Caco-2 (cell line): ENCODE measurements at regions of chr11 and their contacts with region 1.

Region 1: DNA sequence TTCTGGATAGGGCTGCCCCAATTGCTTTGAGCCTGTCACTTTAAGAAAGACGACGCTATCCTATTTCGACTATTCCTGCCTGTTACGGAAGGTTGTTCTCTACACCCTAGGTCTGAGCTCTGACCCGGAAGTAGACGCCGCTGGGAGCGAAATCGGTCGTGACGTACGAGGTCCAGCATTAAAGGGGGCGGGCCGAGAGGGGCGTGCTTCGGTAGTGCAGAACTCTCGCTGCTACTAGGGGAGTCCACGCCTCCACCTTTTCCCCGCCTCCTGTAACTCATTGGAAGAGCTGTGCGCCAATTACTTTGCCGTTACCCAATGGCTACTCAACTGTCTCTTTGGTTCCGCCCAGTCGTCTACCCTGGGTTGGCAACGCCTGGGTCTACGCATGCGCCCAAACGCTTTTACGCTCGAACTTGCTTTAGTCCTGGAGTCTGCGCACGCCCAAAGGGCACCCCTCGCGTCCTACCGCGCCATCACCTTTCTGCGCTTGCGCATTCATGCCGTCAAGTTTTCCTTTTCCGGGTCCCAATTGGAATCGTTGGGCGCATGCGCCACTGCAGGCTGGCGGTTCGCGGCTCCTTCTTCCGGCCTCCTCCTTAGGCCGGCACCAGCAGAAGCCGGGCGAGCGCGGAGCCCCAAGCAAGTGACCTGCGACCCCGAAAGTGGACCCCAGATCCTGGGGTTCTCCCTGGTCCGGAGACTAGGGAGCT is at the start of gene PCNX3:
- DNase-seq: peak; percentile 100
- H3K4me3 ChIP-seq: peak within 1 kb of the TSS; percentile 91
- H3K4me3 Mint-ChIP-seq: peak within 1 kb of the TSS; percentile 96
- H3K27ac Mint-ChIP-seq: peak within 1 kb of the TSS; percentile 96
- H3K4me1 ChIP-seq: peaks cover 17% of the 10 kb centered on the region
- H3K4me1 Mint-ChIP-seq: peaks cover 24% of the 10 kb centered on the region
- H3K27me3 ChIP-seq: no peaks in the 10 kb centered on the region
- H3K27me3 Mint-ChIP-seq: no peaks in the 10 kb centered on the region
- CTCF ChIP-seq: no peak
- total RNA-seq, gene PCNX3: 52.7 and 52.8 TPM in 2 replicates

Region 2: GRCh38 chr11:65625628-65626342 is 10.4 kb after region 1 on chr11:
- CTCF ChIA-PET with region 1: no interaction called
- POLR2A ChIA-PET with region 1: no interaction called
- intact Hi-C with region 1: no loop called
- DNase-seq: peak in 1 of 2 experiments; percentile 34
- H3K4me3 ChIP-seq: no peak overlapping the region
- H3K4me3 Mint-ChIP-seq: no peak overlapping the region
- H3K27ac Mint-ChIP-seq: peak overlapping the region; percentile 76
- H3K4me1 ChIP-seq: no peaks in the 10 kb centered on the region
- H3K4me1 Mint-ChIP-seq: no peaks in the 10 kb centered on the region
- H3K27me3 ChIP-seq: no peaks in the 10 kb centered on the region
- H3K27me3 Mint-ChIP-seq: no peaks in the 10 kb centered on the region
- CTCF ChIP-seq: peak in 1 of 2 experiments; percentile 44

Region 3: GRCh38 chr11:65652511-65653231 is 37.3 kb after region 1 on chr11:
- CTCF ChIA-PET with region 1: no interaction called
- POLR2A ChIA-PET with region 1: interaction called, 8 read pairs
- intact Hi-C with region 1: loop called (anchors 2 kb)
- DNase-seq: peak; percentile 93 to 96
- H3K4me3 ChIP-seq: peak overlapping the region; percentile 59
- H3K4me3 Mint-ChIP-seq: peak overlapping the region; percentile 76
- H3K27ac Mint-ChIP-seq: peak overlapping the region; percentile 96
- H3K4me1 ChIP-seq: peaks cover 18% of the 10 kb centered on the region
- H3K4me1 Mint-ChIP-seq: peaks cover 18% of the 10 kb centered on the region
- H3K27me3 ChIP-seq: no peaks in the 10 kb centered on the region
- H3K27me3 Mint-ChIP-seq: no peaks in the 10 kb centered on the region
- CTCF ChIP-seq: no peak

Region 4: DNA sequence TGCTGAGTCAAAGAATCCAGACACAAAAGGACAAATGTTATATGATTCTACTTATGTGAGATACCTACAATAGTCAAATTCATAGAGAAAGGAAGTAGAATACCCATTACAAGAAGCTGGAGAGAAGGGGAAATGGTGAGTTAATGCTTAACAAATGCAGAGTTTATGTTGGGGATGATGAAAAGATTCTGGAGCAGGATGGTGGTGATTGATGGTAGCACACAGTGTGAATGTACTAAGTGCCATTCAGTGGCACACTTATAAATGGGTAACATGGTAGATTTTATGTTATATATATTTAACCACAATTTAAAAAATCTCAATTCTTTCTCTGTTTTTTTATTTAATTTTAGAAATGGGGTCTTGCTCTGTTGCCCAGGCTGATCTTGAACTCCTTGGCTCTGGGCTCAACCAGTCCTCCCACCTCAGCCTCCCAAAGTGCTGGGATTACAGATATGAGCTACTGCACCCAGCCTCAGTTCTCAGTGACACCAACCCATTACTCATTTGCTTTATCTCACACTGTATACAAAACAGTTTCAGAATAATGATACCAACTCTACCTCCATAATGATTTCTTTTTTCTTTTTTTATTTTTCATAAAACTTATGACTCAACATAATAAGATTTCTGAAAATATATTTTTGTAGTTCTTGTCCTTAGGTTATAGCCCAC is 56.9 kb after region 1 on chr11:
- CTCF ChIA-PET with region 1: no interaction called
- POLR2A ChIA-PET with region 1: no interaction called
- intact Hi-C with region 1: no loop called
- DNase-seq: no peak
- H3K4me3 ChIP-seq: no peak overlapping the region
- H3K4me3 Mint-ChIP-seq: no peak overlapping the region
- H3K27ac Mint-ChIP-seq: no peak overlapping the region
- H3K4me1 ChIP-seq: no peaks in the 10 kb centered on the region
- H3K4me1 Mint-ChIP-seq: no peaks in the 10 kb centered on the region
- H3K27me3 ChIP-seq: no peaks in the 10 kb centered on the region
- H3K27me3 Mint-ChIP-seq: no peaks in the 10 kb centered on the region
- CTCF ChIP-seq: no peak

Region 5: DNA sequence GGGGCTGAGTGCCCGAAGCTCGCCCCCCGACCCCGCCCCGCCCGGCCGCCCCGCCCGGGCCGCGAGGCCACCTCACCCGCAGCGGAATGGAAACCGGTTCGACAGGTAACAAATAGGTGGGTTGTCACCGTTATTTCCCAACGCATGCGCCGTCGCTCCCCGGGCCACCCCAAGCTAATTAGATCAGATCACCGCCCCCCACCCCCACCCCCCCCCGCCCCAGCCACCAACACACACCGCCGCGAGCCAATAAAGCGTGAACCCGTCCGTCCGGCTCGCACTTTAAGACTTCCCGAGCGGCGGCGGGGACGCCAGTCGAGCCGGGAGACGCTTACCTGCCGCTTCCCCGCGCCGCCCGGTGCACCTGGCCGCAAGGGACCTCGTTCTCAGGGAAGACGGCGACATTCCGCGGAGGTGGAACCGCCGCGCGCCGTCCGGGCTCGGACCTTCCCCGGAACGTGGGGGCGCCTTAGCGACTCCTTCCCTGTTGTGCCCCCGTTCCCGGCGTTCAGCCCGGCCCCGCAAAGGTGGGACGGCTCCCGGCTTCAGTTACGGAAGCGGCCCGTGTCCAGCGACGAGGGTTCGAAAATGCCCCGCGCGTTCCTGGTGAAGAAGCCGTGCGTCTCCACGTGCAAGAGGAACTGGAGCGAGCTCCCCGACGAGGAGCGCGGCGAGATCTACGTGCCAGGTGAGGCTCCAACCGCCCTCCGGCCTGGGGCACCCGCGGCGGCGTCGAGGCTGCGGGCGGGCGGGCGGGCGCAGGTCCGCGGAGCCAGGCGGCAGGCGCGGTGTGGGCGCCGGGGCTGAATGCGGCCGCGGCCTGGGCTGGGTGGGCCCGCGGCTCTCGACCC is 171.6 kb after region 1 on chr11 and contains the start of gene OVOL1:
- CTCF ChIA-PET with region 1: no interaction called
- POLR2A ChIA-PET with region 1: no interaction called
- intact Hi-C with region 1: loop called (anchors 1 kb)
- DNase-seq: peak; percentile 93 to 95
- H3K4me3 ChIP-seq: peak within 1 kb of the TSS; percentile 85
- H3K4me3 Mint-ChIP-seq: peak within 1 kb of the TSS; percentile 76
- H3K27ac Mint-ChIP-seq: peak within 1 kb of the TSS; percentile 76
- H3K4me1 ChIP-seq: peaks cover 37% of the 10 kb centered on the region
- H3K4me1 Mint-ChIP-seq: peaks cover 22% of the 10 kb centered on the region
- H3K27me3 ChIP-seq: no peaks in the 10 kb centered on the region
- H3K27me3 Mint-ChIP-seq: no peaks in the 10 kb centered on the region
- CTCF ChIP-seq: no peak
- total RNA-seq, gene OVOL1: 19.5 and 21.2 TPM in 2 replicates